CD8-positive, alpha-beta T cell (primary cell): ENCODE measurements at regions of chr3 and their contacts with region 1.

Region 1: GRCh38 chr3:84184937-84185520 is 773.8 kb upstream of the CADM2 start:
- DNase-seq: no peak
- ATAC-seq: no peak
- H3K4me3 ChIP-seq: no peak overlapping the region
- H3K4me3 Mint-ChIP-seq: no peak overlapping the region
- H3K27ac ChIP-seq: no peak overlapping the region
- H3K27ac Mint-ChIP-seq: no peak overlapping the region
- H3K4me1 ChIP-seq: no peaks in the 10 kb centered on the region
- H3K4me1 Mint-ChIP-seq: no peaks in the 10 kb centered on the region
- H3K27me3 ChIP-seq: no peaks in the 10 kb centered on the region
- H3K27me3 Mint-ChIP-seq: no peaks in the 10 kb centered on the region
- CTCF ChIP-seq: no peak

Region 2: DNA sequence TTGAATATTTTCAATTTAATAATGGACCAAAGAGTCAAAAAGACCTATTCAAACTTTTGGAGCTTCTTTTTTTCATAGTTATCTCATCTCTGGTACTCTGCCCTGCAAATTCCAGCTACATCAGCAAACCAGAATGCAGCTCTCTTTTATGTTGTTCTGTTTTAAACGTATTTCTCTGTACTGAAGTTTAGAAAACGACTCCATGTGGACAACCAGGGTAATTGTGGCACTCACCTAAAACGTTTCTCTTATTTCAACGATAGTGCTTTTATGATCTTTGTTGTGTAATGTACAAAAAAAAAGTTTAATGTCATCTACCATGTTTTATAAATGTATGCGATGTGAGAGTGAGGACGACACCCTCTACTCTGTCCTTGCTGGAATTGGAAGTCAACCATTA is 951.3 kb before region 1 on chr3:
- CTCF ChIA-PET with region 1: no interaction called
- POLR2A ChIA-PET with region 1: no interaction called
- intact Hi-C with region 1: no loop called
- DNase-seq: no peak
- ATAC-seq: no peak
- H3K4me3 ChIP-seq: no peak overlapping the region
- H3K4me3 Mint-ChIP-seq: no peak overlapping the region
- H3K27ac ChIP-seq: no peak overlapping the region
- H3K27ac Mint-ChIP-seq: no peak overlapping the region
- H3K4me1 ChIP-seq: no peaks in the 10 kb centered on the region
- H3K4me1 Mint-ChIP-seq: no peaks in the 10 kb centered on the region
- H3K27me3 ChIP-seq: no peaks in the 10 kb centered on the region
- H3K27me3 Mint-ChIP-seq: no peaks in the 10 kb centered on the region
- CTCF ChIP-seq: no peak

Region 3: GRCh38 chr3:84224262-84224661 is 39.2 kb after region 1 on chr3:
- CTCF ChIA-PET with region 1: no interaction called
- POLR2A ChIA-PET with region 1: no interaction called
- intact Hi-C with region 1: no loop called
- DNase-seq: no peak
- ATAC-seq: no peak
- H3K4me3 ChIP-seq: no peak overlapping the region
- H3K4me3 Mint-ChIP-seq: no peak overlapping the region
- H3K27ac ChIP-seq: no peak overlapping the region
- H3K27ac Mint-ChIP-seq: no peak overlapping the region
- H3K4me1 ChIP-seq: no peaks in the 10 kb centered on the region
- H3K4me1 Mint-ChIP-seq: no peaks in the 10 kb centered on the region
- H3K27me3 ChIP-seq: no peaks in the 10 kb centered on the region
- H3K27me3 Mint-ChIP-seq: no peaks in the 10 kb centered on the region
- CTCF ChIP-seq: no peak

Region 4: DNA sequence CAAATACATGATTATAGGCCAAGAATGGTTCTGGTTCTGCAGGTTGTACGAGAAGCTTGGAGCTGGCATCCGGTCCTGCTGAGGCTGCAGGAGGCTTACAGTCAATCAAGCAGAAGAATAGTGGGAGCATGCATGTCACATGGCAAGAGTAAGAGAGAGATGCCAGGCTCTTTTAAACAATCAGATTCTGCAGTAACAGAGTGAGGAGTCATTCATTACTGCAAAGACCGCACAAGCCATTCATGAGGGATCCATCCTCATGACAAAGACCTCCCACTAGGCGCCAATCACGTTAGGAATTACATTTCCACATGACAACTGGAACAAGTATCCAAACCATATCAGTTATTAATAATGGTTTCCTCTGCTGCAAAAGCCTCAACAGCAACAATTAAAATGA is 1310.6 kb after region 1 on chr3:
- CTCF ChIA-PET with region 1: no interaction called
- POLR2A ChIA-PET with region 1: no interaction called
- intact Hi-C with region 1: loop called in 1 of 2 experiments (anchors 5 kb)
- DNase-seq: no peak
- ATAC-seq: no peak
- H3K4me3 ChIP-seq: no peak overlapping the region
- H3K4me3 Mint-ChIP-seq: no peak overlapping the region
- H3K27ac ChIP-seq: no peak overlapping the region
- H3K27ac Mint-ChIP-seq: no peak overlapping the region
- H3K4me1 ChIP-seq: no peaks in the 10 kb centered on the region
- H3K4me1 Mint-ChIP-seq: no peaks in the 10 kb centered on the region
- H3K27me3 ChIP-seq: no peaks in the 10 kb centered on the region
- H3K27me3 Mint-ChIP-seq: no peaks in the 10 kb centered on the region
- CTCF ChIP-seq: no peak